AG04450 (cell line): ENCODE measurements at regions of chr2 and their contacts with region 1.

Region 1: GRCh38 chr2:47323009-47323821 is 79.7 kb upstream of the MSH2 start:
- DNase-seq: peak; percentile 47
- H3K4me3 ChIP-seq: no peak overlapping the region
- H3K27ac ChIP-seq: no peak overlapping the region
- H3K27me3 ChIP-seq: no peaks in the 10 kb centered on the region
- CTCF ChIP-seq: peak; percentile 97

Region 2: GRCh38 chr2:45888167-45888566 is 1435.0 kb before region 1 on chr2:
- CTCF ChIA-PET with region 1: no interaction called
- POLR2A ChIA-PET with region 1: interaction called, 10 read pairs
- DNase-seq: peak; percentile 36
- H3K4me3 ChIP-seq: no peak overlapping the region
- H3K27ac ChIP-seq: no peak overlapping the region
- H3K27me3 ChIP-seq: no peaks in the 10 kb centered on the region
- CTCF ChIP-seq: no peak

Region 3: DNA sequence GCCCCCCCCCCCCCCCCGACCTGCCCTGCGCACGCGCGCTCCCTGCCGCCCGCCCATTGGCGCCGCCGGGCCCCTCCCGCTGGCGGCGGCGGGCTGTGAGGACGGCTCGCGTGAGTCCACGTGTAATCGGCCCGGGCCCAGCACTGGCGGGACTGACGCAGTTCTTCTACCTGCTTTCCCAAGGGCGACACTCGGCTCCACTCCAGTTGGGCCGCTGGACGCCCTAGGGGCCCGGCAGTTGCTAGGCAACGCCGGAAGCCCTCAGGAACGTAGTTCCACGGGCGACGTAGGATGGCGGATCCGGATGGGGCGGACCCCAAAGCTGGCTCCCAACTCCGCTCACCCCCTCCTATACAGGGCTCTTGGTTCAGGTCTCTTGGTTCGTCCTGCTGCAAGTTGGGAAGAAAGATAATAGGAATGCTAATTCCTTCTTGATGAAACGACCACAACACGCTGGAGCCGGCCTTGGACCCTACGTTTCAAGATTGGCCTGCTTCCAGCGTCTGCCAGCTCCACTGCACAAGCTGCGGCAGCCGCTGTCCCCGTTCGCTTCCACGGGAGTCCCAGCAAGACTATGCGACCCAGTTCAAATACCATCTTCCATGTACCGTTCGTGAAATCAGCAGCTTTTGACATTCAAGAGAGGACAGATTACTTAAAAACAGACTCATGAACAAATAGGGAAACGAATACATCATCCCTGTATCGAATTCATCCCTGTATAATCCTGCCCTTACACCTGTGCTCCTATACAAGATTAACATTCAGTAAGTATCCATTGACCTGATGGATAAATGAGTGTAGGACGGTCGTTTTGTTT is 407.2 kb before region 1 on chr2:
- CTCF ChIA-PET with region 1: interaction called, 52 read pairs
- POLR2A ChIA-PET with region 1: interaction called, 6 read pairs
- DNase-seq: peak; percentile 72
- H3K4me3 ChIP-seq: peak overlapping the region; percentile 94
- H3K27ac ChIP-seq: peak overlapping the region; percentile 68
- H3K27me3 ChIP-seq: no peaks in the 10 kb centered on the region
- CTCF ChIP-seq: no peak

Region 4: DNA sequence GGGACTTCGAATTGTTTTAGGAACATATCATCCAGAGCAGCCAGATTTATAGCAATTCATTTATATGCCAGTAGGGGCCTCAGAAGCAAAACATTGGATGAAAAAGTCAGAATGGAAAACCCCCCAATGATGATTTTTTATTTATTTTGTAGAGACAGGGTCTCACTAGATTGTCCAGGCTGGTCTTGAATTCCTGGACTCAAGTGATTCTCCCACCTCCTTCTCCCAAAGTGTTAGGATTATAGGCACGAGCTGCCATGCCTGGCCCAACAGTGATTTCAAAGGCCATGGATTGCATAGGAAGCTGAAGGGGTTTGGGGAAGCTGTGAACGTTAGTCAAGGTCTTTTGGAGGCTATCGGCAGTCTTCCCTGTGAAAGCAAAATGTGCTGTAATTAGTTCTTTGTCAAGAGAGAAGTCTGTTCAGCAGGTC is 385.7 kb before region 1 on chr2:
- CTCF ChIA-PET with region 1: interaction called, 13 read pairs
- POLR2A ChIA-PET with region 1: no interaction called
- DNase-seq: no peak
- H3K4me3 ChIP-seq: no peak overlapping the region
- H3K27ac ChIP-seq: no peak overlapping the region
- H3K27me3 ChIP-seq: no peaks in the 10 kb centered on the region
- CTCF ChIP-seq: peak; percentile 45

Region 5: DNA sequence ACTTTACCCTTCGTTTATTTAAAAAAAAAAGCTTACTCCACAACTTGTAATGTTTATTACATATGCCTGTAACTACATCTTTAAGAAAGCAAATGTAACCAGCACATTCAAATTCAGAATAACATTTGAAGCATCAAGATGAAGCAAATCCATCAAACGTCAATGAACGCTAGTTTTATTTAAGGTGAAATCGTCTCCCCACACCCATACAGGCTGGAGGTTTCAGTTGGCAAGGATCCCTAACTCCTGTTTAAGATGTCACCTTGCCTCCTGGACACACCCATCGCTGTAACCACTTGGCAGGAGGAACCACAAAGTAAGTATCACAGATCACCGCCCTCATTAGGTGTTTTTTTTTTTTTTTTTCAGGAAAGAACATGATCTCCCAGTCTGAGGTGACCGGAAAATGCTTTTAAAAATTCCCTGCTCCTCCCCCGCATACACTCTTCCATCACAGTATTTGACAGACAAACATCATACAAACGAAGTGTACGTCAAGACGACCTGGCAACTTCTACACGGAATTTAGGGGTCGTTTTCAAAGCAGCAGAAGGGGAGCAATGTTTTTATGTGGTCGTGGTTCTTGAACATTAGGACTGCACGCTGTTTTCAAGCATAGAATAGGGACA is 148.4 kb before region 1 on chr2:
- CTCF ChIA-PET with region 1: interaction called, 59 read pairs
- POLR2A ChIA-PET with region 1: interaction called, 10 read pairs
- DNase-seq: no peak
- H3K4me3 ChIP-seq: peak overlapping the region; percentile 98
- H3K27ac ChIP-seq: peak overlapping the region; percentile 67
- H3K27me3 ChIP-seq: no peaks in the 10 kb centered on the region
- CTCF ChIP-seq: no peak

Region 6: DNA sequence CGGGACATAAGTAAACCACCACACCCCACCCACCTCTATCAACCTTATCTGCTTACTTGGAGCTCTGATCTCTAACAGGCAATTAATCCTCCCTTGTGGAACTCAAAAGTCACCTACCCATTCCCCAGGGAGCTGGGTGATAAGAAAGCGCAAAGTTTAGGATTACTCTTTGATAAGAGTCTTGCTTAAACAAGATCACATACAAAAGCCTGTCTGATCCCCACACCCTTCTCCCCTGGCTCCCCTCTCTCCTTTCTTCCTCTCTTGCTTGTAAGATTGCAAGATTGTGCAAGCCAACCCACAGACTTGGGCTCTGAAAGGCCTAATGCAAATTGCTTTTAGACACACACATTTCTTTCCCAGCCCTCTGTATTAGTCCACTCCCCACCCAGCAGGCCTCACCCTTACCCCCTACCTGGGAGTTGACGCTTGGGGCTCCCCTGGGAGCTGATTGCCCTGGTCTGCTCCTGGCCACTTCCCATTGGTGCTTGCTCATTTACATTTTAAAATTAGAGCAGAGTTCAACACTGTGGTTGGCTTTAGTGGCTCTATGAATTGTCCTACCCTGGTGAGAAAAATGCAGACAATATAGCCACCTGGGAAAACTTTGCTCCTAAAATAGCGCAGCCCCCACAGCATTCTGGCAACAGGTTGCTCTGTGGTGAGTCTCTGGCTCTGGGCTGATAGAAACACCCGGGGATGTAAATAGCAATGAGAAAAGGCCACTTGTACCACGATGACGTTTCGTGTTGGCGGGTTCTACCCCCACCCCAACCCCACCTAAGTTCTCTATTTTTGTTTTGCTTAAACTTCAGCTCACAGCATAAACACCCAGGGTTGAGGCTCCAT is 13.0 kb before region 1 on chr2:
- CTCF ChIA-PET with region 1: interaction called, 11 read pairs
- POLR2A ChIA-PET with region 1: no interaction called
- DNase-seq: no peak
- H3K4me3 ChIP-seq: no peak overlapping the region
- H3K27ac ChIP-seq: no peak overlapping the region
- H3K27me3 ChIP-seq: no peaks in the 10 kb centered on the region
- CTCF ChIP-seq: no peak

Region 7: GRCh38 chr2:47339745-47340541 is 16.7 kb after region 1 on chr2:
- CTCF ChIA-PET with region 1: interaction called, 26 read pairs
- POLR2A ChIA-PET with region 1: no interaction called
- DNase-seq: no peak
- H3K4me3 ChIP-seq: no peak overlapping the region
- H3K27ac ChIP-seq: no peak overlapping the region
- H3K27me3 ChIP-seq: no peaks in the 10 kb centered on the region
- CTCF ChIP-seq: no peak

Region 8: GRCh38 chr2:47457268-47457667 is 134.1 kb after region 1 on chr2:
- CTCF ChIA-PET with region 1: no interaction called
- POLR2A ChIA-PET with region 1: no interaction called
- DNase-seq: no peak
- H3K4me3 ChIP-seq: no peak overlapping the region
- H3K27ac ChIP-seq: no peak overlapping the region
- H3K27me3 ChIP-seq: no peaks in the 10 kb centered on the region
- CTCF ChIP-seq: no peak

Region 9: GRCh38 chr2:47539228-47539627 is 216.0 kb after region 1 on chr2:
- CTCF ChIA-PET with region 1: no interaction called
- POLR2A ChIA-PET with region 1: no interaction called
- DNase-seq: no peak
- H3K4me3 ChIP-seq: no peak overlapping the region
- H3K27ac ChIP-seq: no peak overlapping the region
- H3K27me3 ChIP-seq: peaks cover 5% of the 10 kb centered on the region
- CTCF ChIP-seq: peak; percentile 33